Heart left ventricle (tissue), 16 donors: ENCODE measurements at regions of chrX and their contacts with region 1.

Region 1: GRCh38 chrX:7996414-7996813 is 69.2 kb upstream of the PNPLA4 start:
- DNase-seq: no peak
- ATAC-seq: peak in 1 of 4 donors; percentile 54
- H3K4me3 ChIP-seq: no peak overlapping the region
- H3K27ac ChIP-seq: no peak overlapping the region
- H3K4me1 ChIP-seq: no peaks in the 10 kb centered on the region
- H3K27me3 ChIP-seq: peaks cover 0 to 3% (median 0%) of the 10 kb centered on the region in 9 donors
- CTCF ChIP-seq: peak in 11 of 12 donors; percentile 32 to 68 (median 57)
- POLR2A ChIP-seq: no peak

Region 2: DNA sequence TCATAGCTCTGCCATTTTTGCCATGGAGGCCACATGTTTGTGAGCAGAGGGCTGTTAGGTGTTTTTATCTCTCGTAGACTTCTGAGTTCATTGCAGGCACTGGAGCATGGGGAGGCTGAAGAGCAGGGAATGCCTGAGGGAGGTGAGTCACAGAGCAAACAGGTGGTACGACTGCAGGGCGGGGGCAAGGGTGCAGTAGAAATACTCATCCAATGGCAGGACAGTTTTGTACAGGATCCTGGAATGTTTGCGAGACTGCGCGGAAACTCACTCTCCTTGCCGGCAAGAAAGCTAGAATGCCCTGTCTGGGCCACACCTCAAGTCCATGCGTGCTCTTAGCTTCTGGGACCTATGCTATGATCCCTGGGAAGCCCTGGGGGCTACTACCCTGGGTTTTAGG is 194.6 kb after region 1 on chrX:
- intact Hi-C with region 1: loop called in 1 of 10 experiments (anchors 10 kb)
- DNase-seq: no peak
- ATAC-seq: no peak
- H3K4me3 ChIP-seq: no peak overlapping the region
- H3K27ac ChIP-seq: no peak overlapping the region
- H3K4me1 ChIP-seq: no peaks in the 10 kb centered on the region
- H3K27me3 ChIP-seq: no peaks in the 10 kb centered on the region
- CTCF ChIP-seq: no peak
- POLR2A ChIP-seq: no peak

Region 3: GRCh38 chrX:8364369-8365141 is 368.1 kb after region 1 on chrX:
- intact Hi-C with region 1: loop called in 2 of 10 experiments (anchors 10 kb)
- DNase-seq: peak in 3 of 5 donors; percentile 5 to 36 (median 19)
- ATAC-seq: peak in 2 of 4 donors; percentile 24 to 51
- H3K4me3 ChIP-seq: no peak overlapping the region
- H3K27ac ChIP-seq: no peak overlapping the region
- H3K4me1 ChIP-seq: peaks cover 0 to 12% (median 0%) of the 10 kb centered on the region in 12 donors
- H3K27me3 ChIP-seq: no peaks in the 10 kb centered on the region
- CTCF ChIP-seq: peak; percentile 21 to 56 (median 40)
- POLR2A ChIP-seq: no peak

Region 4: GRCh38 chrX:8743126-8743732 is 746.8 kb after region 1 on chrX:
- intact Hi-C with region 1: loop called (anchors 2 to 5 kb)
- DNase-seq: peak in 4 of 5 donors; percentile 25 to 62 (median 47)
- ATAC-seq: no peak
- H3K4me3 ChIP-seq: no peak overlapping the region
- H3K27ac ChIP-seq: no peak overlapping the region
- H3K4me1 ChIP-seq: no peaks in the 10 kb centered on the region
- H3K27me3 ChIP-seq: no peaks in the 10 kb centered on the region
- CTCF ChIP-seq: peak; percentile 45 to 76 (median 52)
- POLR2A ChIP-seq: no peak

Region 5: GRCh38 chrX:8815464-8816065 is 819.2 kb after region 1 on chrX:
- intact Hi-C with region 1: loop called in 3 of 10 experiments (anchors 5 to 10 kb)
- DNase-seq: no peak
- ATAC-seq: no peak
- H3K4me3 ChIP-seq: no peak overlapping the region
- H3K27ac ChIP-seq: no peak overlapping the region
- H3K4me1 ChIP-seq: no peaks in the 10 kb centered on the region
- H3K27me3 ChIP-seq: peaks cover 0 to 8% (median 0%) of the 10 kb centered on the region in 9 donors
- CTCF ChIP-seq: peak; percentile 46 to 82 (median 66)
- POLR2A ChIP-seq: no peak